Transverse colon (tissue), 4 donors: ENCODE measurements at regions of chr4 and their contacts with region 1.

Region 1: DNA sequence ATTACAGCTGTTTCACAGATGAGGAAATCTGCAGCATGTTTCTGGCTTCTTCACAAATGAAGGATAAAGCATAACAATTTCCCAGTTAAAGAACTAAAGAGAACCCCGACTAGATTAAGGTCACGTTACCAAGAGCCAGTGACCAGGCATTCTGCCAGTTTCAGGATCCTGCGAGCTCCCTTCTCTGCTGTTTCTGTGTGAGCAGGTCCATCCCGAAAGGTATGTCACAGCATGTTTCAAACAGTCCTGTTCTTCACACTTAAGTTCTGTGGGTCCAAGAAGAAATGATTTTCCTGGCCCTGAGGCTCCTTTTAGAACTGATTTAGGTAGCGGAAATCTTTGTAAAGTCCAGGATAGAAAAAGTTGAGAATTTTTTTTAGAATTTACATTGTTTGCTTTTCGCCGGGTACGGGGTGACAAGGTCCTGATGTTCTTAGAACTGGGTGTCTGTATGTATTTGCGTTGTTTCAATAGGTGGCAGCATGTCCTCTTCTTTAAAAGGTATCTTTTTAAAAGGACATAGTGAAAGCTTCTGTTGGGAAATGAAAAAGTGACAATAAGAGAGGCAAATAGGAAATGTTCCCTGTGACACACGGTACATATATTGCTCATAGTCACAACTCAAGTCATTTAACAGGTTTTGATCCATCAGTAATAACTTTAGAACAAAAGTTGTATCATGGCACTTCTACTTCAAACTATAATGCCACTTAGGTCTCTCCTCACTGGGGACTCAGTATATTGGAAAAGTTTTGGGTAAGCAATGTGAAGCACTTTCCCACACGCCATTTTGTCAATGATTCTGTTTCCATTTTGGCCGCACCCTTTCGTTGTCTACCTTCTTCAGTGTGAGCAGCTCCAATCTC is 18.4 kb downstream of the IL21 start:
- DNase-seq: no peak
- H3K4me3 ChIP-seq: no peak overlapping the region
- H3K27ac ChIP-seq: no peak overlapping the region
- H3K4me1 ChIP-seq: no peaks in the 10 kb centered on the region
- H3K27me3 ChIP-seq: peaks cover 40% of the 10 kb centered on the region
- CTCF ChIP-seq: peak; percentile 19 to 34 (median 28)
- EP300 ChIP-seq: no peak
- POLR2A ChIP-seq: no peak

Region 2: DNA sequence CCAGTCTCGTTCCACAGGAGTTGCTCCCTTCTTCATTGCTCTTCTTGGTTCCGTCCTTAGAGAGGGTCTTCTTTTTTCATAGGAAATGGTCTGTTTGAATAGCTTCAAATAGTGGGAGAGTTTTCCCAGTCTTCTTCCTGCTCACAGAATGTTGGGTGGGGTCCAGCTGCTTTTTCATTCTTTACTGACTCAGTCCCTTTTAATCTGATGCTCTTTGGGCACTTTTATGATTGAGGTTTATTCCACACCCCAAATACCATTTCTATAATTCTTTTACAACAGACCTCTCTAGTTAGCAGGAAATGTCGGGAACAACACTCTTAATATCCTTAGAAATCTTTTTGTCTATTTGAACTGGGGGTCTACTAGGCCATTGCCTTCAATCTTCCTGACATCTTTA is 1919.5 kb before region 1 on chr4:
- in situ Hi-C with region 1: no loop called
- intact Hi-C with region 1: no loop called
- DNase-seq: no peak
- H3K4me3 ChIP-seq: no peak overlapping the region
- H3K27ac ChIP-seq: no peak overlapping the region
- H3K4me1 ChIP-seq: no peaks in the 10 kb centered on the region
- H3K27me3 ChIP-seq: no peaks in the 10 kb centered on the region
- CTCF ChIP-seq: no peak
- EP300 ChIP-seq: no peak
- POLR2A ChIP-seq: no peak

Region 3: DNA sequence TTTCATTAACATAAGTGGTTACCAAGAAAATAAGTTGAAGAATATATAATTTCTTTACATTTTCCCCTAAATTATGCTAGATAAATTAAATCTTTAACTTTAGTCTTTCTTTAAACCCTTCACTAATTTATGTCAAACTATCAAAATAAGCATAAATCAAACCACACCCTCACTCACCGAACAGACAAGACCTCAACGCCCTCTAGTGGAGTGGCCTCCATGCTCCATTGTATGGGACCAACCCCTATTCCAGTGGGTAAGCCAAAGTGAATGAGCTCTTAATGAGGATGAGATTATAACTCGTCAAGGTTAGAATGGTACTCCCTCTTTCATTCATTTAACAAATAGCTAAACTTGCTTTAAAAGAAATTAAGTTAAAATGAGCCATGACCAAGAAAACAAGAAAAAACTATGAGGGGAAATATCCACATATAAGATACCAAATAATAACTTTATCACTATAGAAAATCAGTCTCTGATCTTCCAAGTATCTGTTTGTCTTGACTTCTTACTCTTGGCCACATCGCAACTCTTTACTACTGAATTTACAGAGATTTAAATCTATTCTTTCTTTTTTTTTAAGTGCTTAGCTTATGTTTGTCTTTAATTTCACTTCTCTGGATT is 114.4 kb after region 1 on chr4:
- in situ Hi-C with region 1: loop called in 2 of 4 experiments (anchors 10 kb)
- intact Hi-C with region 1: loop called (anchors 1 kb)
- DNase-seq: peak; percentile 74
- H3K4me3 ChIP-seq: no peak overlapping the region
- H3K27ac ChIP-seq: no peak overlapping the region
- H3K4me1 ChIP-seq: no peaks in the 10 kb centered on the region
- H3K27me3 ChIP-seq: no peaks in the 10 kb centered on the region
- CTCF ChIP-seq: peak; percentile 66 to 80 (median 69)
- EP300 ChIP-seq: no peak
- POLR2A ChIP-seq: no peak

Region 4: DNA sequence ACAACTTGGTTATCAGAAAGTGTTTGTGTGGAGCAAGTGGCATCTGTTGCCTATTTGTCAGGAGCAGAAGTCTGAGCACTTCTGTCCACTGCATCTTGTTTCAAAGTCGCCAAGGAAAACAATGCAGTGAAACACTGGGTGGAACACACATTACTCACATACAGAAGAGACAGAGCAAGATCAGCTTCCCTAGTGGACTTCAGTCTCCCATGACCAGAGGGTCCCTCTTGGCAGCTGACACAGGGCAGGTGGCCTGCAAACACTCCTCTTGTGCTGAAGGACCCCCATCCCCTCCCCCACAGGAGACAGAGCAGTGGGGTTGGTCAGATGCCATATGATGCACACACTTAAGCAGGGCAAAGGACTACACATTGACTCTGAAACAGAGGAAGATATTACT is 126.3 kb after region 1 on chr4:
- in situ Hi-C with region 1: loop called in 1 of 4 experiments (anchors 10 kb)
- intact Hi-C with region 1: no loop called
- DNase-seq: no peak
- H3K4me3 ChIP-seq: no peak overlapping the region
- H3K27ac ChIP-seq: no peak overlapping the region
- H3K4me1 ChIP-seq: peaks cover 2 to 13% (median 11%) of the 10 kb centered on the region in 4 donors
- H3K27me3 ChIP-seq: no peaks in the 10 kb centered on the region
- CTCF ChIP-seq: no peak
- EP300 ChIP-seq: no peak
- POLR2A ChIP-seq: no peak

Region 5: DNA sequence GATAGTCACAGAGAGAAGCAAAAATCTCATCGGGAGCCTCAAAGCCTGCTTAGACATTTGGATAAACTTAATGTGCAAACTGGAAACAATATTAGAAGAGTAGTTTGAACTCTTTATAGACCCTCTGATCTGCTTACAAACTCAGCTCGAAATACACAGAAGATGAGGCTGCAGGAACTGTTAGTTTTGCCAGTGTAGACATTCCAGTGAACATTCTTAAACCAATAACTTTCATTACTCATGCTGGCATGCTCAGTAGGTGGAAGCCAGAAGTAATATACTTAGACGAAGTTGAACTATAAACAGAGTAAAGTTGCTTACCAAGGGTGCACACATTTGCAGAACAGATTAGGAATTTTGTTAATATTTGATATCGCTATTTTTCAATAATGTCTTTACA is 1806.5 kb after region 1 on chr4:
- in situ Hi-C with region 1: no loop called
- intact Hi-C with region 1: no loop called
- DNase-seq: no peak
- H3K4me3 ChIP-seq: no peak overlapping the region
- H3K27ac ChIP-seq: no peak overlapping the region
- H3K4me1 ChIP-seq: no peaks in the 10 kb centered on the region
- H3K27me3 ChIP-seq: no peaks in the 10 kb centered on the region
- CTCF ChIP-seq: no peak
- EP300 ChIP-seq: no peak
- POLR2A ChIP-seq: no peak